ENCODE measurements at regions of chr4 and their contacts with region 1.

Region 1: DNA sequence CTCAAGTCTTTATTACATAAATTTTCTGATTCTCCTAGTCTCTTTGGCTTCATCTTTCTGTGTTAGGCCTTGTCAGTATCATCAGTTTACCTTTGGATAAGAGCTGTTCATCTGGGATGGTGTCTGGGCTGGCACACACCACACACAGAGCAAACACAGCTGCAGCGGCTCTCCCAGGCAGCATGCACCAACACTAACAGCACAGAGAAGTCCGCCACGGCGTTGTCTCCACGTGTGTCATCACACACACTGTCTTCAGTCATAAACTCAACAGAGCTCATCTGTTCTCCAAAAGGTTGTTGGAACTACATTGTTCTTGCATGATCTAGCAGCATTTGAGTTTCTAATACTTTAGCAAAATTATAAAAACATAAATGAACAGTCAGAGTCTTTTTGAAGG is 851.9 kb upstream of the FRG1 start:
- DNase-seq: no peak
- ATAC-seq: no peak
- H3K4me3 ChIP-seq: no peak overlapping the region
- H3K27ac ChIP-seq: no peak overlapping the region
- H3K4me1 ChIP-seq: no peaks in the 10 kb centered on the region
- H3K27me3 ChIP-seq: no peaks in the 10 kb centered on the region
- CTCF ChIP-seq: no peak
- POLR2A ChIP-seq: no peak

Region 2: GRCh38 chr4:188408244-188409030 is 680.3 kb before region 1 on chr4:
- in situ Hi-C with region 1: no loop called
- intact Hi-C with region 1: no loop called
- DNase-seq: no peak
- ATAC-seq: no peak
- H3K4me3 ChIP-seq: no peak overlapping the region
- H3K27ac ChIP-seq: no peak overlapping the region
- H3K4me1 ChIP-seq: no peaks in the 10 kb centered on the region
- H3K27me3 ChIP-seq: no peaks in the 10 kb centered on the region
- CTCF ChIP-seq: no peak
- POLR2A ChIP-seq: no peak

Region 3: GRCh38 chr4:189185810-189186432 is 97.1 kb after region 1 on chr4:
- in situ Hi-C with region 1: no loop called
- intact Hi-C with region 1: loop called (anchors 5 kb)
- DNase-seq: no peak
- ATAC-seq: no peak
- H3K4me3 ChIP-seq: no peak overlapping the region
- H3K27ac ChIP-seq: no peak overlapping the region
- H3K4me1 ChIP-seq: no peaks in the 10 kb centered on the region
- H3K27me3 ChIP-seq: no peaks in the 10 kb centered on the region
- CTCF ChIP-seq: no peak
- POLR2A ChIP-seq: no peak

Region 4: GRCh38 chr4:189355590-189355989 is 266.8 kb after region 1 on chr4:
- in situ Hi-C with region 1: no loop called
- intact Hi-C with region 1: no loop called
- DNase-seq: no peak
- ATAC-seq: no peak
- H3K4me3 ChIP-seq: no peak overlapping the region
- H3K27ac ChIP-seq: no peak overlapping the region
- H3K4me1 ChIP-seq: no peaks in the 10 kb centered on the region
- H3K27me3 ChIP-seq: no peaks in the 10 kb centered on the region
- CTCF ChIP-seq: no peak
- POLR2A ChIP-seq: no peak

Measured in gastrocnemius medialis (tissue), 4 donors.